ENCODE measurements at regions of chr4 and their contacts with region 1.

Region 1: GRCh38 chr4:3346146-3346545 is 53.3 kb downstream of the RGS12 start:
- DNase-seq: peak; percentile 75
- H3K4me3 ChIP-seq: no peak overlapping the region
- H3K27ac ChIP-seq: no peak overlapping the region
- H3K4me1 ChIP-seq: peaks cover 25% of the 10 kb centered on the region
- H3K27me3 ChIP-seq: no peaks in the 10 kb centered on the region
- CTCF ChIP-seq: peak; percentile 70 to 76
- POLR2A ChIP-seq: no peak

Region 2: GRCh38 chr4:3074078-3074795 is 271.9 kb before region 1 on chr4 and contains the starts of genes HTT and HTT-AS:
- CTCF ChIA-PET with region 1: no interaction called
- POLR2A ChIA-PET with region 1: no interaction called
- dilution Hi-C with region 1: no loop called
- intact Hi-C with region 1: no loop called
- DNase-seq: peak; percentile 97
- H3K4me3 ChIP-seq: peak within 1 kb of the TSS; percentile 64 to 86 (median 79)
- H3K27ac ChIP-seq: peak within 1 kb of the TSS; percentile 78
- H3K4me1 ChIP-seq: peaks cover 13% of the 10 kb centered on the region
- H3K27me3 ChIP-seq: no peaks in the 10 kb centered on the region
- CTCF ChIP-seq: peak in 1 of 2 donors; percentile 13
- POLR2A ChIP-seq: peak; percentile 70
- total RNA-seq, gene HTT: 61.2 and 63.2 TPM in 2 replicates
- total RNA-seq, gene HTT-AS: not detected in 2 replicates

Region 3: DNA sequence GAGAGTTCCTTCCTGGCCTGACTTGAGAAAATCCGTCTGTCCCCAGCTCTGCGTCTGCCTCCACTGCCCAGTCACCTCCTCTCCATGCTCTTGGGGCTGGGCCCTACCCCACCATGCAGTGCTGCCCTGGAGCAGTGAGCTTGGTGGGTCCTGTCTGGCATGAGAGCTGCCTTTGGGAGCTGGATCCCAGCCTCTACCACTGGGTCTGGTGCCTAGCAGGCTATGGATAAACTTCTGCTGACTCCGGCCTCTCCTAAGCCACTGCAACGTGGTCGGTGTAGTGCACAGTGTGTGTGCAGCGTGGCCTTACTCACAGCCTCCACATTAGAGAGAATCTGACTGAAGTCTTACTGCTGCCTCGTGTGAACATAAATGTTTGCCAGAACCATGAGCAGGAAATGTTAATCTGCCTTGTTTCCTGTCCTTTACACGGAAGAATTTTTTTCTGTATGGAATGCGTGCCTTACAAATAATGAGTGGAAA is 224.0 kb before region 1 on chr4:
- CTCF ChIA-PET with region 1: no interaction called
- POLR2A ChIA-PET with region 1: no interaction called
- dilution Hi-C with region 1: no loop called
- intact Hi-C with region 1: no loop called
- DNase-seq: peak; percentile 92
- H3K4me3 ChIP-seq: peak overlapping the region in 1 of 3 experiments; percentile 6
- H3K27ac ChIP-seq: peak overlapping the region; percentile 92
- H3K4me1 ChIP-seq: peaks cover 34% of the 10 kb centered on the region
- H3K27me3 ChIP-seq: no peaks in the 10 kb centered on the region
- CTCF ChIP-seq: no peak
- POLR2A ChIP-seq: peak; percentile 37

Region 4: DNA sequence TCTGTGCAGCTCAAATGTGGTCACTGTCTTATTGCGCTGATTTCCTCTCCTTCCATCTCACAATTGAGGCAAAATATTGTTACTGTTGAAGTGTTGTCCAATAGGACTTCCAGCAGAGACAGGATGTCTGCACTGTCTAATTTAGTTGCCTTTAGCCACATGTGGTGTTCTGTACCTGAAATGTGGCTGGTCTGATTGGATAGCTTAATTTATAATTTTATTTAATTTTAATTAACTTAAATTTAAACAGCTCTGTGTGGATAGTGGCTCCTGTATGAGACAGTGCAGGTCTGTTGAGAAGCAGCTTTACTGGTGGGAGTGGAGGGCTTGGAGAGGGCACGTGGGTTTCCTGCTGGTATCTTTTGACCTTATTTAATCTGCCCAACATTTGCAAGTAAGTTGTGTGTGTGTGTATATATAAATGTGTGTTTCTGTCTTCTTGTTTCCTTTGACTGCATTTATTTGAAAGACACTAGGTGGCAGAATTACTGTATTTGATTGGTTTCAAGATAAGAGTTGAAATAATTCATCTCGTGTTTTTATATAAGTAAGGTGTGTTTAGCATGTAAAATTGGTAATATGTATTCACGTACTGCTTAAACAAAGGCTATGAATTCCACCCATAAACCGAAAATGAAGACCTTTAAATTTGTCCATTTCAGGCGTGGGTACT is 152.5 kb before region 1 on chr4:
- CTCF ChIA-PET with region 1: interaction called, 12 read pairs
- POLR2A ChIA-PET with region 1: no interaction called
- dilution Hi-C with region 1: no loop called
- intact Hi-C with region 1: no loop called
- DNase-seq: peak; percentile 44
- H3K4me3 ChIP-seq: no peak overlapping the region
- H3K27ac ChIP-seq: no peak overlapping the region
- H3K4me1 ChIP-seq: no peaks in the 10 kb centered on the region
- H3K27me3 ChIP-seq: no peaks in the 10 kb centered on the region
- CTCF ChIP-seq: peak; percentile 18 to 20
- POLR2A ChIP-seq: no peak

Region 5: DNA sequence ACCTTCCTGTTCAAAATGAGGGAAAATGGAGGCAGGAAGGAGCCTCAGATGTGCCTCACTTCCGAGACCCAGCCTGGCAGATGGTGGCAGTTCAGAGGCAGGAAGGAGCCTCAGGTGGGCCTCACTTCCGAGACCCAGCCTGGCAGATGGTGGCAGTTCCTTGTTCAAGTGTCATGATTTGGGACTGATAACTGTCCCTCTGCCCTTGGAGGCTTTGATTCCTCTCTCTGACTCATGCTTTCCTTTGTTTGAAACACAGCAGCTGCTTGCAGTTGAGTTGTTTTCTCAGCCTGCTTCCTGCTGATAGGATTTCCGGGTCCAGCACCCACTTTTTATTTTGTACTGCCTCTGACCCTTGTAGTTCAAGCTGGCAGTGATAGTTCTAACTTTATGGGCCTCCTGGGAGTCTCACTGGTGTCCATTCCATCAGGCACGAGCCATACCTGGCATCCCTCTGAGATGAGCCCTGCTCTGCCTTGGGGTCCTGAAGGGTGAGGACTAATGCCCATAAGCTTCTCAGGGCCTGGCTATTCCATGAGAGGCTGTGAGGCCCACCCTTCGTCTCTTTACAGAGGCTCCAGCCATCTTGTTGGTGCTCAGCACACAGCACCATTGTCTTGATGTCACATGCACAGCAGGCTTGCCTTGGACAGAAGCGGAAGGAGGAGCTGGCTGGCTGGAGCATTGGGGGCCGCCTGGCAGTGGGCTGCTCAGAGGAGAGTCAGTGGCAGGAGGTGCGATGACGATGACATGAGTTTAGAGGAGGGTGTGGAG is 40.4 kb before region 1 on chr4:
- CTCF ChIA-PET with region 1: interaction called, 9 read pairs
- POLR2A ChIA-PET with region 1: no interaction called
- dilution Hi-C with region 1: no loop called
- intact Hi-C with region 1: loop called (anchors 1 kb)
- DNase-seq: peak; percentile 95
- H3K4me3 ChIP-seq: no peak overlapping the region
- H3K27ac ChIP-seq: peak overlapping the region; percentile 83
- H3K4me1 ChIP-seq: peaks cover 63% of the 10 kb centered on the region
- H3K27me3 ChIP-seq: no peaks in the 10 kb centered on the region
- CTCF ChIP-seq: no peak
- POLR2A ChIP-seq: peak; percentile 70

Region 6: GRCh38 chr4:3369781-3370674 is 23.9 kb after region 1 on chr4:
- CTCF ChIA-PET with region 1: interaction called, 54 read pairs
- POLR2A ChIA-PET with region 1: interaction called, 4 read pairs
- dilution Hi-C with region 1: no loop called
- intact Hi-C with region 1: loop called (anchors 2 kb)
- DNase-seq: peak; percentile 83
- H3K4me3 ChIP-seq: peak overlapping the region in 1 of 3 experiments; percentile 61
- H3K27ac ChIP-seq: peak overlapping the region; percentile 72
- H3K4me1 ChIP-seq: peaks cover 39% of the 10 kb centered on the region
- H3K27me3 ChIP-seq: no peaks in the 10 kb centered on the region
- CTCF ChIP-seq: no peak
- POLR2A ChIP-seq: no peak

Region 7: GRCh38 chr4:3388471-3389232 is 42.5 kb after region 1 on chr4:
- CTCF ChIA-PET with region 1: interaction called, 10 read pairs
- POLR2A ChIA-PET with region 1: no interaction called
- dilution Hi-C with region 1: no loop called
- intact Hi-C with region 1: loop called (anchors 5 kb)
- DNase-seq: peak; percentile 35
- H3K4me3 ChIP-seq: peak overlapping the region in 1 of 3 experiments; percentile 30
- H3K27ac ChIP-seq: peak overlapping the region; percentile 24
- H3K4me1 ChIP-seq: peaks cover 37% of the 10 kb centered on the region
- H3K27me3 ChIP-seq: no peaks in the 10 kb centered on the region
- CTCF ChIP-seq: no peak
- POLR2A ChIP-seq: no peak

Region 8: GRCh38 chr4:3436798-3437581 is 90.8 kb after region 1 on chr4:
- CTCF ChIA-PET with region 1: interaction called, 78 read pairs
- POLR2A ChIA-PET with region 1: interaction called, 3 read pairs
- dilution Hi-C with region 1: no loop called
- intact Hi-C with region 1: no loop called
- DNase-seq: peak; percentile 46
- H3K4me3 ChIP-seq: no peak overlapping the region
- H3K27ac ChIP-seq: peak overlapping the region; percentile 48
- H3K4me1 ChIP-seq: peaks cover 7% of the 10 kb centered on the region
- H3K27me3 ChIP-seq: no peaks in the 10 kb centered on the region
- CTCF ChIP-seq: no peak
- POLR2A ChIP-seq: no peak

Region 9: GRCh38 chr4:3452376-3452775 is 106.2 kb after region 1 on chr4:
- CTCF ChIA-PET with region 1: interaction called, 10 read pairs
- POLR2A ChIA-PET with region 1: no interaction called
- dilution Hi-C with region 1: no loop called
- intact Hi-C with region 1: no loop called
- DNase-seq: no peak
- H3K4me3 ChIP-seq: no peak overlapping the region
- H3K27ac ChIP-seq: no peak overlapping the region
- H3K4me1 ChIP-seq: peaks cover 4% of the 10 kb centered on the region
- H3K27me3 ChIP-seq: peaks cover 0 to 2% of the 10 kb centered on the region in 2 experiments
- CTCF ChIP-seq: peak; percentile 38 to 59
- POLR2A ChIP-seq: no peak

Region 10: DNA sequence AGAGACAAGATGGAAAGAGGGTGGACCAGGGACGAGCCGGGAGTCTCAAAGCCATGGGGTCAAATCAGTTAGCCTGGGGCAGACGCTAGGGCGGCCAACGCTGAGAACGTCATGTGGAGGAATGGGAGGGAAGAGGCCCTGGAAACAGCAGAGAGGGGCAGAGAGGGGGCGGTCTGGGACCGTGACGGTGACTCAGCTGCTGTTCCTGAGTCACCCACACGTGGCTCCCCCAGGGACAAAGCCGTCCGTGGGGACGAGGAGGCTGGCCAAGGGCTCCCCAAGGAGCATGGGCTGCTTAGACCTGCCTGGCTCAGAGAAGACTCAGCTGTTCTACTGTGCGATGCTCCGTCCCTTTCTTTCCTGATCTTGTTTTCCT is 294.4 kb after region 1 on chr4:
- CTCF ChIA-PET with region 1: no interaction called
- POLR2A ChIA-PET with region 1: no interaction called
- dilution Hi-C with region 1: no loop called
- intact Hi-C with region 1: no loop called
- DNase-seq: no peak
- H3K4me3 ChIP-seq: no peak overlapping the region
- H3K27ac ChIP-seq: no peak overlapping the region
- H3K4me1 ChIP-seq: no peaks in the 10 kb centered on the region
- H3K27me3 ChIP-seq: no peaks in the 10 kb centered on the region
- CTCF ChIP-seq: no peak
- POLR2A ChIP-seq: no peak

Region 11: DNA sequence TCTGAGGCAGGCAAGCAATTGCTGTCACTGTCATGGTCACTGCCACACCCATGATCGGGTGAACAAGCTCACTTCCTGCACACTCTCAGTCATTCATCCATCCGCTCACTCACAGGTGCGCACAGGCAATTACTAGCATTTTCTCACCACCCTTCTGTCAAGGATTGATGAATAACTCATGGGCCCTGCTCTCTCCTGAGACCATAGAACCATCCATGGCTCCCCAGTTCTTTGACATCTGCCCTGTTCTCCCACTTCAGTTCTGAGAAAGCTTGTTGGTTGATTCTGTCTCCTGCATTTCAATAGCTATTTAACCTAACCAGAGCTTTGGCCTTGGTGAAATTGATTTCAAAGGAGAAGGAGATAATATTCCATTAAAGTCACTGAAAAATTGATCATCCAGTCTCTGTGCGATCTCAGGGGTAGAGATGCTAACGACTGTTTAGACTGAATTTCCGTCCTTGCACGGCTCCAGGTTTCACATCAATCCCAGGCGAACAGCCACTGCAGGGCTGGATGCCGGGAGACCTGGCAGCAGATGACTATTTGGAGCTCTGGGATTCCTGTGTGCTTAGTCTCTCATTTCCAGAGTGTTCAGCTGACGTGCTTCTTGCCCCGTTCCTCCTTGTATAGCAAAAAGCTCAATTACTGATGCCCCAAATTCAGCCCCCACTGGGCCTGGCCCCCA is 383.2 kb after region 1 on chr4:
- CTCF ChIA-PET with region 1: no interaction called
- POLR2A ChIA-PET with region 1: no interaction called
- dilution Hi-C with region 1: no loop called
- intact Hi-C with region 1: no loop called
- DNase-seq: no peak
- H3K4me3 ChIP-seq: no peak overlapping the region
- H3K27ac ChIP-seq: no peak overlapping the region
- H3K4me1 ChIP-seq: no peaks in the 10 kb centered on the region
- H3K27me3 ChIP-seq: no peaks in the 10 kb centered on the region
- CTCF ChIP-seq: no peak
- POLR2A ChIP-seq: no peak

Measured in endothelial cell of umbilical vein (primary cell).